HepG2 (cell line): ENCODE measurements at regions of chr3 and their contacts with region 1.

Region 1: GRCh38 chr3:173553635-173554280 is 156.2 kb downstream of the NLGN1 start:
- DNase-seq: peak; percentile 10
- ATAC-seq: peak; percentile 61; the same call in 2 of the 3 replicates
- H3K4me3 ChIP-seq: no peak overlapping the region
- H3K27ac ChIP-seq: no peak overlapping the region
- H3K4me1 ChIP-seq: no peaks in the 10 kb centered on the region
- H3K27me3 ChIP-seq: no peaks in the 10 kb centered on the region
- CTCF ChIP-seq: peak; percentile 43
- EP300 ChIP-seq: no peak
- POLR2A ChIP-seq: no peak
- RAD21 ChIP-seq: no peak

Region 2: GRCh38 chr3:172808969-172809546 is 744.7 kb before region 1 on chr3:
- CTCF ChIA-PET with region 1: no interaction called
- POLR2A ChIA-PET with region 1: no interaction called
- in situ Hi-C with region 1: no loop called
- intact Hi-C with region 1: loop called (anchors 5 kb)
- DNase-seq: peak; percentile 7
- ATAC-seq: no peak
- H3K4me3 ChIP-seq: no peak overlapping the region
- H3K27ac ChIP-seq: no peak overlapping the region
- H3K4me1 ChIP-seq: peaks cover 7% of the 10 kb centered on the region; the same call in 1 of the 2 replicates
- H3K27me3 ChIP-seq: no peaks in the 10 kb centered on the region
- CTCF ChIP-seq: peak; percentile 20; the same call in 1 of the 2 replicates
- EP300 ChIP-seq: no peak
- POLR2A ChIP-seq: no peak
- RAD21 ChIP-seq: no peak

Region 3: GRCh38 chr3:173221010-173221409 is 332.7 kb before region 1 on chr3:
- CTCF ChIA-PET with region 1: no interaction called
- POLR2A ChIA-PET with region 1: no interaction called
- in situ Hi-C with region 1: no loop called
- intact Hi-C with region 1: loop called (anchors 2 kb)
- DNase-seq: peak; percentile 5
- ATAC-seq: peak; percentile 60
- H3K4me3 ChIP-seq: no peak overlapping the region
- H3K27ac ChIP-seq: no peak overlapping the region
- H3K4me1 ChIP-seq: no peaks in the 10 kb centered on the region
- H3K27me3 ChIP-seq: no peaks in the 10 kb centered on the region
- CTCF ChIP-seq: peak; percentile 33
- EP300 ChIP-seq: no peak
- POLR2A ChIP-seq: no peak
- RAD21 ChIP-seq: no peak

Region 4: GRCh38 chr3:173411375-173411973 is 142.3 kb before region 1 on chr3:
- CTCF ChIA-PET with region 1: no interaction called
- POLR2A ChIA-PET with region 1: no interaction called
- in situ Hi-C with region 1: no loop called
- intact Hi-C with region 1: loop called (anchors 1 kb)
- DNase-seq: peak; percentile 9
- ATAC-seq: peak; percentile 59
- H3K4me3 ChIP-seq: no peak overlapping the region
- H3K27ac ChIP-seq: no peak overlapping the region
- H3K4me1 ChIP-seq: no peaks in the 10 kb centered on the region
- H3K27me3 ChIP-seq: no peaks in the 10 kb centered on the region
- CTCF ChIP-seq: peak; percentile 29; the same call in 1 of the 2 replicates
- EP300 ChIP-seq: no peak
- POLR2A ChIP-seq: no peak
- RAD21 ChIP-seq: no peak; the same call in 1 of the 2 replicates